Activated T-helper 1 cell treated with anti-CD3 and anti-CD28 coated beads, Interleukin-12 subunit alpha, Interleukin-12 subunit beta, Interleukin-2, Interleukin-4 antibody, amounts not matched to agents 30 ng/mL and 10 ng/mL and 1 ng/mL, durations not matched to agents 14 hours and 24 hours and 36 hours (primary cell): ENCODE measurements at regions of chr19 and their contacts with region 1.

Region 1: DNA sequence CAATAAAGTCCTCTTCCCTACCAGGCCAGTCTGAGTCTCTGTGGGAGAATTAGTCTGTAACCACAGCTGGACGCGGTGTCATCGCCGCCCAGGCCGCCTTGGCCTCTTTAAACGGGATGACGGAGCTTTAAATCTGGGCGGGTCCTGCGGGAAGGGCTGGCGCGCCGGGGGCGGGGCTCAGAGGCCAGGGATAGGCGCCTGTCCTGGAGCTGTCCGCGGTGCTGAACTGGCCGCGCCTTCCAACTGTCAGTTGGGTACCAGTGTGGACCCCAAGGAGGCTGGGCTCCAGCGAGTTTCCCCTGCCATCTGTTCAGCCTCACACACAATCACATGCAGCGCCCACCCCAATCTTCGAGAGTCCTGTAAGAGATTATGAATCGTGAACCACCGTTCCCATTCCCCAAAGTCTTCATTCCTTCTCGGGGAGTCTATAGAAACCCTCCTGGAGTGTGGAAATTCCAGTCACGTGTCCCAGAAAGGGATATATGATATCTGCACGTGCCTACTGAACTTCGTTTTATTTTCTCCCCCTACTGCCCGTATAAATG is 11.5 kb downstream of the APLP1 start:
- DNase-seq: peak; percentile 80
- H3K4me3 Mint-ChIP-seq: no peak overlapping the region
- H3K27ac Mint-ChIP-seq: peak overlapping the region; percentile 23
- H3K4me1 Mint-ChIP-seq: peaks cover 15% of the 10 kb centered on the region
- H3K27me3 Mint-ChIP-seq: peaks cover 12% of the 10 kb centered on the region

Region 2: GRCh38 chr19:35693830-35694599 is 185.8 kb before region 1 on chr19:
- intact Hi-C with region 1: loop called (anchors 5 kb)
- DNase-seq: peak; percentile 86
- H3K4me3 Mint-ChIP-seq: no peak overlapping the region
- H3K27ac Mint-ChIP-seq: peak overlapping the region; percentile 38
- H3K4me1 Mint-ChIP-seq: peaks cover 27% of the 10 kb centered on the region
- H3K27me3 Mint-ChIP-seq: no peaks in the 10 kb centered on the region

Region 3: DNA sequence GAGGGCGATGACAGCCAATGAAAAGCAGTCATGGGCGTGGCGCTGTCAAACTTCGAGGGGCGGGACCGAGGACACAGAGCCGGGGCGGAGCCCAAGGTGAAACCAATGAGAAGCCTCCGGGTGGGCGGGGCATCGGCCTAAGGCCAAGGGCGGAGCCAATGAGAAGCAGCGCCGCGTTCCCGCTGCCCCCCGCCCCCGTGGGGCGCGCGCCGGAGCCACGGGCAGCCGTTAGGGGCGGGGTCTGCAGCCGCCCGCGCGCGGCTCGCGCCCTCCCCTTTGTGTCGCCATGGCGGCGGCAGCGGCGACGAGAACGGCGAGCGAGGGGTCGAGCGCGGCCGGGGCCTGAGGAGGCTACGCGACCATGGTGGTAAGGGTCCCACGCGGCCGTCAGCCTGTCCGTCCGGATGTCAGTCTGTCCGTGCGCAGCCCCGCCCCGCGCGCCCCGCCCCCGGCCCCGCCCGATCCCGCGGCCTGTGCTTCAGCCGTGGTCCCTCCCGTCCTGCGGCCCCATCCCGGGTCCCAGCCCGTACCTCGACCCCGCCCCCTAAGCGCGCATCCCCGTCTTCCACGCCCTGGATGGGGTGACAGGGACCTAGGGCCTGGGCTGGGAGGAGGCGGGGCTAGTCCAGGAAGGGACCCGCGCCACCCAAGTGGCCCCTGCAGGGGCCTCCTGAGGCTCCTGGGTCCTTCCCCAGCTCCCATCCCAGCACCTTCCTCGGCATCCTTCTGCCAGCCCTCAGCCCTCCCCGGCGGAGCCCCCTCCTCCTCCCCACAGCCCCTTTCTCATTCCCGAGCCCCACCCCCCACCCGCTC is 104.3 kb before region 1 on chr19 and contains the start of gene ARHGAP33:
- intact Hi-C with region 1: loop called (anchors 1 kb)
- DNase-seq: peak; percentile 99
- H3K4me3 Mint-ChIP-seq: peak within 1 kb of the TSS; percentile 85
- H3K27ac Mint-ChIP-seq: peak within 1 kb of the TSS; percentile 61
- H3K4me1 Mint-ChIP-seq: peaks cover 29% of the 10 kb centered on the region
- H3K27me3 Mint-ChIP-seq: no peaks in the 10 kb centered on the region
- total RNA-seq, gene ARHGAP33: 24.5 and 25.8 TPM in 2 replicates

Region 4: DNA sequence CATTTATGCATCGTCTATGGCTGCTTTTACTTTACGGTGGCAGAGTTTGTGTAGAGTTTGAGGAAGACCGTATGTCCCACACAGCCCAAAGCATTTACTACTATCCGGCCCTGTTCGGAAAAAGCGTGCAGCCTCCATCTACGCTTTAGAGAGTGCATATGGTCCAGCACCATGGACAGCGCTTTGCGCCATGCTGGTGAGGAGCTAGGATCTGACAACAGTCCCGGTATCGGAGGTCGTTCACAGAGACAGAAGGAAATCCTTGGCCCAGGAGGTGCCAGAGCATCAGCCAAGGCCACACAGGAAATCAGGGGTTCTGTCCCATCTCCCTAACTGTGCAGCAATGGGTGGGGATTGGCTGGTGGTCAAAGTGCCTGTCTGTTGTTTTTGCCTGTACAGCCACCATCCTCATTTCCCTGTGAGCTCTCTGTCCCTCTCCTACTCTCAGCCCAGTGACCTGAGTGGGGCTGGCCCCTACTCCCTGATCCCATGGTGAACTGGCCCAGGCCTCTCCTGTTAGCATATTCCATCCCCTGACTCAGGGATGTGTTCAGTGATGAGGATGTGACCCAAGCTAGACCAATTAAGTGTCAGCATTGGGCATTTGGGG is 51.0 kb before region 1 on chr19:
- intact Hi-C with region 1: loop called (anchors 1 kb)
- DNase-seq: peak; percentile 43
- H3K4me3 Mint-ChIP-seq: no peak overlapping the region
- H3K27ac Mint-ChIP-seq: no peak overlapping the region
- H3K4me1 Mint-ChIP-seq: no peaks in the 10 kb centered on the region
- H3K27me3 Mint-ChIP-seq: peaks cover 11% of the 10 kb centered on the region

Region 5: GRCh38 chr19:35869327-35870123 is 10.3 kb before region 1 on chr19:
- intact Hi-C with region 1: loop called (anchors 1 kb)
- DNase-seq: peak; percentile 85
- H3K4me3 Mint-ChIP-seq: peak overlapping the region; percentile 81
- H3K27ac Mint-ChIP-seq: peak overlapping the region; percentile 42
- H3K4me1 Mint-ChIP-seq: peaks cover 23% of the 10 kb centered on the region
- H3K27me3 Mint-ChIP-seq: peaks cover 26% of the 10 kb centered on the region

Region 6: DNA sequence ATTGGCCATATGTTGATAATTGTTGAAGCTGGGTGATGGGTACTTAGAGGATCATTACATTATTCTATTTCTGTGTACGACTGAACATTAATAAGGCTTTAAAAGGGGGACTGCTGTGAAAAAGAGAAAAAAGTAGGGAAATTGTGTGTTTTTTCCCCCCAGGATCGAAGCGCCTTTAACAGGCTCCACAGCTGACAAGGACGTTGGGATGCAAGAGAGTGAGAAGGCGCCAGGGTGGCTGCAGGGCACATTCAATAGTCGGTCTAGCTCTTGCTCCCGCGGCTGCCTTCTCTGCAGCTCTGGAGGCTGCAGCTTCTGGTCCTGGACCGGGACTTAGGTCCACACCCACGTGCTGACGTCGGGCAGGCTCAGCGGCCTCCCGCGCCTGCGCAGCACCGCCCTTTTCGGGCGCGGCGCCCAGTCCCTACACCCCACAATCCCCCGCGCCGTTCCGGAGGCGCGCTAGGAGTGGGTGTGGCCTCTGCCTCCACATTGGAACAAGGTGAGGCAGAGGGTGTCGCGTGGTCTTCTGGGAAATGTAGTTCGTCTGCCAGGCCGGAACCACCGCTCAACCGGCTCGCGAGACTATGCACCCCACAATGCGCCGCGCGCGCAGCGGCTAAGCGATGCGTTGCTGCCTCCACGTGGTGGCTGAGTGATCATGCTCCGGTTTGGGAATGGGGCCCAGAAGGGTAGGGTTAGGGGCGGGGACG is 51.5 kb after region 1 on chr19:
- intact Hi-C with region 1: loop called (anchors 1 kb)
- DNase-seq: peak; percentile 100
- H3K4me3 Mint-ChIP-seq: peak overlapping the region; percentile 70
- H3K27ac Mint-ChIP-seq: peak overlapping the region; percentile 81
- H3K4me1 Mint-ChIP-seq: peaks cover 30% of the 10 kb centered on the region
- H3K27me3 Mint-ChIP-seq: no peaks in the 10 kb centered on the region

Region 7: DNA sequence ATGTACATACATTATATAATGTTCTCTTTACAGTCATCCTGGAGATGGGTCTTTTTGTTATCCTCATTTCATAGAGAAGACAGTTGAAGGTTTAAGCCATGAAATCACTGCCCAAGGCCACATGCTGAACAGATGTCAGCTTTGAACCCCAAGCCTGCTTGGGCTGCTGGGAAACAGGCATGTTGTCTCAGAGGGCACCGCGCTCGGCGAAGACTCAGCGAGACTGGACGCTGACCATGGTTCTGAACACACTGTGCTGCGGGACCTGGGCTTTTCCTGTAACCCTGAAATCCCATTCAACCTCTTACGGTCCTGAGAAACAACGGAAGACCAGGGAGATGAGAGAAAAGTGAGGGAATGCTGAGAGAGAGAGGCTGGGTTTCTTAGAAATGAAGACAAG is 83.7 kb after region 1 on chr19:
- intact Hi-C with region 1: no loop called
- DNase-seq: peak; percentile 34
- H3K4me3 Mint-ChIP-seq: no peak overlapping the region
- H3K27ac Mint-ChIP-seq: no peak overlapping the region
- H3K4me1 Mint-ChIP-seq: peaks cover 3% of the 10 kb centered on the region
- H3K27me3 Mint-ChIP-seq: peaks cover 13% of the 10 kb centered on the region